H1 (cell line): ENCODE measurements at regions of chr1 and their contacts with region 1.

Region 1: GRCh38 chr1:15820478-15820877 is 13.0 kb upstream of the UQCRHL start:
- DNase-seq: no peak
- H3K4me3 ChIP-seq: no peak overlapping the region
- H3K27ac ChIP-seq: no peak overlapping the region
- H3K4me1 ChIP-seq: no peaks in the 10 kb centered on the region
- H3K27me3 ChIP-seq: no peaks in the 10 kb centered on the region
- CTCF ChIP-seq: no peak
- EP300 ChIP-seq: no peak
- POLR2A ChIP-seq: no peak
- RAD21 ChIP-seq: no peak

Region 2: GRCh38 chr1:15796086-15796462 is 24.4 kb before region 1 on chr1:
- CTCF ChIA-PET with region 1: interaction called, 16 read pairs
- POLR2A ChIA-PET with region 1: no interaction called
- DNase-seq: no peak
- H3K4me3 ChIP-seq: no peak overlapping the region
- H3K27ac ChIP-seq: no peak overlapping the region
- H3K4me1 ChIP-seq: peaks cover 0 to 18% (median 12%) of the 10 kb centered on the region in 4 experiments; a peak in 6 of 7 replicates
- H3K27me3 ChIP-seq: no peaks in the 10 kb centered on the region
- CTCF ChIP-seq: no peak
- EP300 ChIP-seq: no peak
- POLR2A ChIP-seq: no peak
- RAD21 ChIP-seq: no peak

Region 3: DNA sequence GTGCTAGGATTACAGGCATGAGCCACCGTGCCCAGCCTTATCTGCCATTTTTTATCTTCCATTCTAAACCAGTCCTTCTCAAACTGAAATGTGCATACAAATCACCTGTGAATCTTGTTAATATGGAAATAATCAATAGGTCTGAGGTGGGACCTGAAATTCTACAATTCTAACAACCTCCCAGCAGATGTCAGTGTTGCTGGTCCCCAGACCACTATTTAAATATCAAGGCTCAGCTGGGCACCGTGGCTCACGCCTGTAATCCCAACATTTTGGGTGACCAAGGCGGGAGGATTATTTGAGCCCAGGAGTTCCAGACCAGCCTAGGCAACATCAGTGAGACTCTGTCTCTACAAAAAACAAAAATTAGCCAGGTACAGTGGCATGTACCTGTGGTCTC is 17.1 kb before region 1 on chr1:
- CTCF ChIA-PET with region 1: interaction called, 17 read pairs
- POLR2A ChIA-PET with region 1: no interaction called
- DNase-seq: peak in 1 of 2 experiments; percentile 68
- H3K4me3 ChIP-seq: no peak overlapping the region
- H3K27ac ChIP-seq: no peak overlapping the region
- H3K4me1 ChIP-seq: peaks cover 0 to 18% (median 12%) of the 10 kb centered on the region in 4 experiments; a peak in 6 of 7 replicates
- H3K27me3 ChIP-seq: no peaks in the 10 kb centered on the region
- CTCF ChIP-seq: peak; percentile 19 to 67 (median 55)
- EP300 ChIP-seq: no peak
- POLR2A ChIP-seq: no peak
- RAD21 ChIP-seq: peak; percentile 66 to 81

Region 4: GRCh38 chr1:15835741-15836510 is 15.4 kb after region 1 on chr1:
- CTCF ChIA-PET with region 1: interaction called, 28 read pairs
- POLR2A ChIA-PET with region 1: interaction called, 32 read pairs
- DNase-seq: peak; percentile 91 to 96
- H3K4me3 ChIP-seq: peak overlapping the region; percentile 68 to 80 (median 71)
- H3K27ac ChIP-seq: peak overlapping the region; percentile 98
- H3K4me1 ChIP-seq: peaks cover 0 to 9% (median under 1%) of the 10 kb centered on the region in 4 experiments; a peak in 3 of 7 replicates
- H3K27me3 ChIP-seq: no peaks in the 10 kb centered on the region
- CTCF ChIP-seq: no peak
- EP300 ChIP-seq: 0 out of 3 replicates have a peak, but pooled peaks of 1 of the 2 experiments have one; percentile 72
- POLR2A ChIP-seq: peak; percentile 8 to 40
- RAD21 ChIP-seq: no peak

Region 5: DNA sequence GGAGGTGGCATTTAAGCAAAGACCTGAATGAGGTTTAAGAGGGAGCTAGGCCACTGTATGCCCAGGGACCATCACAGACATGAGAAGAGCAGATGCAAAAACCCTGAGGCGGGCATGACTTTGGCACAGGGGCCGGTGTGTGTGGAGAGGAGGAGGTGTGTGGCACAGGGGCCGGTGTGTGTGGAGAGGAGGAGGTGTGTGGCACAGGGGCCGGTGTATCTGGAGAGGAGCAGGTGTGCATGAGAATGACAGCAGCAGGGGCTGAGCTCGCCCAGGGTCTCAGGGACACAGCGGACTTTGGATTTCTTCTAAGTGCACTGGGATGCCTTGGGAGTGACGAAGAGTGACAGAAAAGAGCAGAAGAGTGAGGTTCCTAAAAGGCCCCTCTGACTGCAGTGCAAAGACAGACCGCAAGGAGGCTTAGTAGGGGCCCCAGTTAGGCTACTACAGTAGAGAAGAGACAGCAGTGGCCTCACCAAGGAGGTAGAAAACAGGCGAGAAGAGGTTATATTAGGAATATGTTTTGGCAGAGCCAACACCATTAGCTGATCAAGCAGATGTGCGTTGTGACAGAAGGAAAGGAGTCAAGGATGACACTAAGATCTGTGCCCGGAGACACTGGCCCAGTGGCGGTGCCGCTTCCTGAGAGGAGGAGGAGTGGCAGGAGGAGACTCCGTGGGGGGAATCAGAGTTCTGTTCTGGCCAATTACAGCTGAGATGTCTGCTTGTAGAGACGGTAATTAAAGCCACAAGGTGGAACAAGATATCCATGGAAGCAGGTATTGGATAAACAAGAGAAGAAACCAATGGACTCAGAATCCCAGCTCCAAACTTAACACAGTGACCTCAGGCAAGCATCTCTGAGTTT is 137.0 kb after region 1 on chr1:
- CTCF ChIA-PET with region 1: interaction called, 10 read pairs
- POLR2A ChIA-PET with region 1: no interaction called
- DNase-seq: peak in 1 of 2 experiments; percentile 76
- H3K4me3 ChIP-seq: no peak overlapping the region
- H3K27ac ChIP-seq: no peak overlapping the region
- H3K4me1 ChIP-seq: peaks cover 6 to 18% (median 11%) of the 10 kb centered on the region in 4 experiments
- H3K27me3 ChIP-seq: peaks cover 0 to 3% (median under 1%) of the 10 kb centered on the region in 4 experiments; a peak in 2 of 7 replicates
- CTCF ChIP-seq: peak; percentile 52 to 75 (median 72)
- EP300 ChIP-seq: no peak
- POLR2A ChIP-seq: no peak
- RAD21 ChIP-seq: peak; percentile 34 to 60; a peak in 3 of 4 replicates

Region 6: DNA sequence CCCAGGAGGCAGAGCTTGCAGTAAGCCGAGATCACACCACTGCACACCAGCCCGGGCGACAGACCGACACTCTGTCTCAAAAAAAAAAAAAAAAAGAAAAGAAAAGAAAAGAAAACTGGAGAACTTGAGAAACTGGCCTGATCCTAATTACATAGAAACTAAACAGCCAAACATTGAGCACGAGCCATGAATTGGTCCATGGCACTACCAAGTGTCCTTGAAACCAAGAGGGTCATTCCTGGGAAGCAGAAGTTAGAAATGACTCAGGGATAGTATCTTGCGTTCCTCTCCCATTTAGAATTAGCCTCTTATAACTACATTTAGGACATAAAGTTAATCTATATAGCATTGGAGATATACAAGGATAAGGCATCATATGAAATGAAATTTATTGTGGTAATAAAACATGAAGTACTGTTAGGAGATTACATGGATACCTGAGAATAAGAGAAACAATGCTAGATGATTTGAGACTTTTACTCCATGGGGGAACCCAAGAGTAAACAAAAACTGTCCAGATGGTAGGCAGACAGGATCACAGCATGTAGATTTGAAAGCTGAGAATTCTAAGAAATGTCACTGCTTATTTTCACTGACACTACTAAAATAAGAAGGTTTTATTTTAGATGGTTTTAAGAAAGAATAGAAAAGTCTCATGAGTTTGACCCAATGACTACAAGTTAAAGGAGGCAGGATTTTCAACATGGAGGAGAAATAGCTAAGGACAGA is 456.0 kb after region 1 on chr1:
- CTCF ChIA-PET with region 1: no interaction called
- POLR2A ChIA-PET with region 1: no interaction called
- DNase-seq: no peak
- H3K4me3 ChIP-seq: no peak overlapping the region
- H3K27ac ChIP-seq: no peak overlapping the region
- H3K4me1 ChIP-seq: no peaks in the 10 kb centered on the region
- H3K27me3 ChIP-seq: no peaks in the 10 kb centered on the region
- CTCF ChIP-seq: no peak
- EP300 ChIP-seq: no peak
- POLR2A ChIP-seq: no peak
- RAD21 ChIP-seq: no peak